Activated T-helper 1 cell treated with anti-CD3 and anti-CD28 coated beads, Interleukin-12 subunit alpha, Interleukin-12 subunit beta, Interleukin-2, Interleukin-4 antibody, amounts not matched to agents 30 ng/mL and 10 ng/mL and 1 ng/mL, durations not matched to agents 14 hours and 24 hours and 36 hours (primary cell): ENCODE measurements at regions of chr2 and their contacts with region 1.

Region 1: GRCh38 chr2:28681158-28681571 is 70.5 kb upstream of the PPP1CB start:
- DNase-seq: peak; percentile 67
- H3K4me3 Mint-ChIP-seq: peak overlapping the region; percentile 73
- H3K27ac Mint-ChIP-seq: peak overlapping the region; percentile 90
- H3K4me1 Mint-ChIP-seq: peaks cover 80% of the 10 kb centered on the region
- H3K27me3 Mint-ChIP-seq: no peaks in the 10 kb centered on the region

Region 2: GRCh38 chr2:28594289-28595108 is 86.7 kb before region 1 on chr2:
- intact Hi-C with region 1: loop called (anchors 1 kb)
- DNase-seq: peak; percentile 71
- H3K4me3 Mint-ChIP-seq: peak overlapping the region; percentile 49
- H3K27ac Mint-ChIP-seq: peak overlapping the region; percentile 78
- H3K4me1 Mint-ChIP-seq: peaks cover 30% of the 10 kb centered on the region
- H3K27me3 Mint-ChIP-seq: peaks cover 4% of the 10 kb centered on the region

Region 3: DNA sequence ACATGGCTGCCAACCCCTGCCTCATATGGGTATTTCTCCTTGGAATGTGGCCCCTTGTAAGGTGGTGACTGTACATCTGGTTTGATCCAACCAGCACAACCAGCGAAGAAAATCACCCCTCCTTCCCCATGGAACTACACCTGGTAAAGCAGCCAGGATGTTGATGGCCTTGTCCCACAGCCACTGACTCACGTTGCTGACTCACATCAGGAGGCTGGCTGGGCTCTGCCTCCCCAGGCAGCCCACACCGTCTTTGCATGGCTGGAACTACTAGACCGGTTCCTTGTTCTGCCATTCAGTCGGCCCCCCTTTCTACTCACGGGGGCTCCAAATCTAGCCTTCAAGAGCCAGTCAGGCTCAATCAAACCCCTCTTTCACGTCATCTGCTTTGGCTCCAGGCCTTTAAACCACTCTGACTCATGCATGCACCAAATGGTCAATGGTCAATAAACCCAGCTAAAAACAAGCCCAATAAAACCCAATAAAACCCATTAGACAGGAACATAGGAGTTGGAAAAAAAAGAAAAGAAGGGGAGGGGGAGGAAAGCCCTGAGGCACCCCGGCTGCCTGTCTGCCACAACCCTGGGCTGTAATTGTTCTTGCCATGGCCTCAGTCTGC is 70.5 kb before region 1 on chr2:
- intact Hi-C with region 1: loop called (anchors 1 kb)
- DNase-seq: no peak
- H3K4me3 Mint-ChIP-seq: peak overlapping the region; percentile 47
- H3K27ac Mint-ChIP-seq: peak overlapping the region; percentile 29
- H3K4me1 Mint-ChIP-seq: peaks cover 30% of the 10 kb centered on the region
- H3K27me3 Mint-ChIP-seq: no peaks in the 10 kb centered on the region

Region 4: GRCh38 chr2:28649481-28650214 is 31.5 kb before region 1 on chr2:
- intact Hi-C with region 1: loop called (anchors 1 kb)
- DNase-seq: no peak
- H3K4me3 Mint-ChIP-seq: no peak overlapping the region
- H3K27ac Mint-ChIP-seq: peak overlapping the region; percentile 84
- H3K4me1 Mint-ChIP-seq: peaks cover 48% of the 10 kb centered on the region
- H3K27me3 Mint-ChIP-seq: no peaks in the 10 kb centered on the region

Region 5: GRCh38 chr2:28656937-28657615 is 24.1 kb before region 1 on chr2:
- intact Hi-C with region 1: loop called (anchors 1 kb)
- DNase-seq: no peak
- H3K4me3 Mint-ChIP-seq: no peak overlapping the region
- H3K27ac Mint-ChIP-seq: peak overlapping the region; percentile 57
- H3K4me1 Mint-ChIP-seq: peaks cover 54% of the 10 kb centered on the region
- H3K27me3 Mint-ChIP-seq: peaks cover 6% of the 10 kb centered on the region

Region 6: DNA sequence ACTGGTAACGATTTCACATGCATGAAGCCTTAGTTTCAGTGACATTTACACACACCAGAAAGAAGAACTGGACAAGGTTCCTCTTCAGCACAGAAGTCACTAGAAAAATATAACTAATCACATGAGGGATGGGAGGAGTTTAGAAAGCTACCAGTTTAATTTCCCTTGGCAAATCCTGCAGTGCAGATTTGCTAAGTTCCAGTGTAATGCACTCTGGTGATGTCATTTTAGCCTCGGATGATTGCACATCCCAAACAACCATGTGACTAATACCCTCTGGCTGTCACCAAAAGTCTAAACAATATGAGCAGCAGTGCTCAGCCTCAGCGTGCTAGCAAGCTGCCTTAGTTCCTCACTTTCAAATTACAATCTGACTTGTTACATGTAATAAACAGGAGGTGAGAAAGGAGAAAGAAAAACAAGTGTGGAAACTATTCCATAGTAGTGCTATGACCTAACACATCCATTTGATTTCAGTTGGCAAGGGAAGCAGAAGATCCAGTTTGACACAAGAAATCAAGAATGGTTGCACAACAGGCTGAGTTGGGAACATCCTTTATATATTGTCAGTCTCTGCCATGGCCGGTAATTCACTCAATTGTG is 35.2 kb after region 1 on chr2:
- intact Hi-C with region 1: loop called (anchors 5 kb)
- DNase-seq: no peak
- H3K4me3 Mint-ChIP-seq: no peak overlapping the region
- H3K27ac Mint-ChIP-seq: no peak overlapping the region
- H3K4me1 Mint-ChIP-seq: peaks cover 26% of the 10 kb centered on the region
- H3K27me3 Mint-ChIP-seq: no peaks in the 10 kb centered on the region